Adrenal gland (tissue), 19 donors: ENCODE measurements at regions of chr21 and their contacts with region 1.

Region 1: GRCh38 chr21:44299458-44300261 is at the start of gene PFKL:
- DNase-seq: peak; percentile 48 to 72 (median 62)
- H3K4me3 ChIP-seq: peak within 1 kb of the TSS; percentile 15 to 86 (median 53)
- H3K27ac ChIP-seq: peak within 1 kb of the TSS; percentile 48 to 92 (median 83)
- H3K4me1 ChIP-seq: peaks cover 8 to 28% of the 10 kb centered on the region in 2 donors
- H3K27me3 ChIP-seq: no peaks in the 10 kb centered on the region
- CTCF ChIP-seq: no peak
- POLR2A ChIP-seq: peak in 1 of 2 donors; percentile 24
- total RNA-seq, gene PFKL: 38.9 to 123 (median 90.3) TPM

Region 2: DNA sequence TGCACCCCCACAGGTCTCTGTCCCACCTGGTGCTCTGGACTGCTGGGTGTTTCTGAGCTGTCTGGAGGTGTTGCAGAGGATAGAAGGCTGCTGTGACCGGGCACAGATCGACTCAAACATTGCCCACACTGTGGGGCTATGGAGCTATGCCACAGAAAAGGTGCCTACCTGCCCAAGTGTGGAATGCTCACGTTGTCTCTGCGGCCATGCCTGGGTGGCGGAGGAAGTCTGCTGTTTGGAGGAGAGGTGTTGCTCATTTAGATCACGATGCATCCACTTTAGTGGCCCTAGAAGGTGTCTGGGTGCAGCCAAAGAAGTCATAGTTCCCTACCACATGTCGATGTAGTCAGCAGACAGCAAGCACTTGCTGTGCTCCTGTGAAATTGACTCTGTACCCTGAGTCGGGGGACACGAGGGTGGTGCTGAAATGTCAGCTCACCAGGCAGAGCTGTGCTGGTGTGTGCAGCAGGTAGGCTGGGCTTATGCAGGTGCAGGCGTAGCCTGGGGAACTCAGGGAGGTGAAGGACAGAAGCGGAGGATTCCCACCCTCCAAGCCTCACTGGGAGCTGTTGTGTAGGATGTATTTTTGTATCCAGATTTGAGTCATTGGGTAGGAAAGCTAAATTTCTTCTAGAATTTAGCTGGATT is 225.2 kb before region 1 on chr21:
- intact Hi-C with region 1: no loop called
- DNase-seq: no peak
- H3K4me3 ChIP-seq: no peak overlapping the region
- H3K27ac ChIP-seq: no peak overlapping the region
- H3K4me1 ChIP-seq: no peaks in the 10 kb centered on the region
- H3K27me3 ChIP-seq: no peaks in the 10 kb centered on the region
- CTCF ChIP-seq: no peak
- POLR2A ChIP-seq: no peak

Region 3: DNA sequence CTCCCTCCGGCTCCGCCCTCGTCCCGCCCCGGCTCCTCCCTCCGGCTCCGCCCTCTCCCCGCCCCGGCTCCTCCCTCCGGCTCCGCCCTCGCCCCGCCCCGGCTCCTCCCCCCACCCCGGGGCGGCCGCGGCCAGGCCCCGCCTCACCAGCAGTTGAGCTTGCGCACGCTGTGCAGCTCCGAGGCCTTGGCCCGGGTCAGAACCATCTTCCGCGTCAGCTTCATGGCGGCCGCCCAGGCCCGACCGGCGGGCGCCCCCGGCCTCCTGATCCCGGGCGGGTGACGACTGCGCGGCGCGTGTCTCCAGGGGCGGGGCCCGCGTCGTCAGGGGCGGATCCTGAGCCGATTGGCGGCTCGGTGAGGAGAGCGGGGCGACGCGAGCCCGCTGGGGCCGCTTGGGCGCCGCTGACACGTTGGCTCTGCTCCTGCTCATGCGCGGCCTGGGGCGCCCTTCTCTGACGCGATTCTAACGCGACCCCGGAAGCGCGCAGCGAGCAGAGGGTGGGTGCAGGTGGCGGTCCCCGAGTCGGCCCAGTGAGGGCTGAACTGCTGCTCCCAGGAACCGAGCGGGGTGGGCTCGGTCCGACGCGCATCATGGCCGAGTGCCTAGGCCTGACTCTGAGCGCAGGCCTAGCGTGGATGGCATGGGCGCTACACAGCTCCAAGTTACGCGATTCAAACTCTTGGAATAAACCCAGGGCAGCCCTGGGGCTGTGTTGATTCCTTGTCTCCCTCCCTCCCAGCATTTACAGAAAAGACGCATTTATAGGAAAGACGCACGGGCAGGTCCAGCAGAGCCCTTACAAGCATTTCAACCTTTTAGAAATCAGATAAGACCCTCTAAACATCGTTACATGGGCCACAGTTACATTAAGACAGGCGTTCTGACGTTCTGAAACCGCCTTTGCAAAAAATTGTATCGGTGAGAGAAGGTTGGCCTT is 39.6 kb after region 1 on chr21 and contains the start of gene CFAP410:
- intact Hi-C with region 1: loop called in 1 of 2 experiments (anchors 5 kb)
- DNase-seq: peak; percentile 94 to 96 (median 96)
- H3K4me3 ChIP-seq: peak within 1 kb of the TSS; percentile 43 to 68 (median 62)
- H3K27ac ChIP-seq: peak within 1 kb of the TSS; percentile 88 to 99 (median 97)
- H3K4me1 ChIP-seq: peaks cover 11 to 19% of the 10 kb centered on the region in 2 donors
- H3K27me3 ChIP-seq: no peaks in the 10 kb centered on the region
- CTCF ChIP-seq: no peak
- POLR2A ChIP-seq: peak; percentile 92
- total RNA-seq, gene CFAP410: 12.4 to 73.5 (median 35.7) TPM